ENCODE measurements at regions of chr1 and their contacts with region 1.

Region 1: GRCh38 chr1:119859647-119860046 is 36.7 kb downstream of the ADAM30 start:
- DNase-seq: peak; percentile 49
- ATAC-seq: peak; percentile 55
- H3K4me3 Mint-ChIP-seq: no peak overlapping the region
- H3K27ac Mint-ChIP-seq: peak overlapping the region; percentile 73
- H3K4me1 Mint-ChIP-seq: peaks cover 25% of the 10 kb centered on the region
- H3K27me3 Mint-ChIP-seq: peaks cover 34% of the 10 kb centered on the region

Region 2: DNA sequence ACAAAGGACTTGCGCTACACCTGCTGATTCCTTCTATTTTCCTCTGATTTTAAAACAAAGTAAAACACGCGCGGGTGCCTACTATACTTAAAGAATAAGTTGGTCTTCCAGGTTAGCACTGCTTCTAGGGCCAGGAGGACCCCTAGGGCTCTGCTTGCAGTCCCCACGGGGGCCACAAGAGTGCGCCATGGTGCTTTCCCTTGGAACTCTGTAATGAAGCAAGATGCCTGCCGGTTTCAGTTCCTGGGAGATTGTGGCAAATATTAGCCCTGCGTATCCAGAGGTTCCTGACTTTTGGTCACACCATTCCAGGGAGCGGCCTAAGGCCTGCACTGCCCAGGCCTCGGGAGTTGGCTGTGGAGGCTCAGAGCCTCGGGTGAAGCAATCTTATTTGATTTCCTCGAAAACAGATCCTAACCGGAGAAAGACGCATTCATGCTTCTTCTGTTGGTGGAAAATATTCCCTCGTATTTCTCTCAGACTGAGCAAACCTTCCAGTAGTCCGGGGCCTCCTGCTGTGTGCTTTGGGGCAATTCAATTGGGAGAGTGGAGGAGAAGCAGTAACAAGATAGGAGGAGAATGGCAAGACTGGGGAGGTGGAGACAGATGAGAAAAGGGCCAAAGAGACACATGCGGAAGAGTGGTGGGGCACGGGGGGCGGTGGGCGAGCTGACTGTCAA is 11.4 kb after region 1 on chr1:
- CTCF ChIA-PET with region 1: interaction called, 11 read pairs
- DNase-seq: peak; percentile 85
- ATAC-seq: peak; percentile 73
- H3K4me3 Mint-ChIP-seq: no peak overlapping the region
- H3K27ac Mint-ChIP-seq: no peak overlapping the region
- H3K4me1 Mint-ChIP-seq: peaks cover 17% of the 10 kb centered on the region
- H3K27me3 Mint-ChIP-seq: peaks cover 54% of the 10 kb centered on the region

Measured in activated CD8-positive, alpha-beta memory T cell treated with anti-CD3 and anti-CD28 coated beads, Interleukin-2, amount 10 ng/mL, durations not matched to agents 7 days and 5 days (primary cell).